ENCODE measurements at regions of chr3 and their contacts with region 1.

Region 1: DNA sequence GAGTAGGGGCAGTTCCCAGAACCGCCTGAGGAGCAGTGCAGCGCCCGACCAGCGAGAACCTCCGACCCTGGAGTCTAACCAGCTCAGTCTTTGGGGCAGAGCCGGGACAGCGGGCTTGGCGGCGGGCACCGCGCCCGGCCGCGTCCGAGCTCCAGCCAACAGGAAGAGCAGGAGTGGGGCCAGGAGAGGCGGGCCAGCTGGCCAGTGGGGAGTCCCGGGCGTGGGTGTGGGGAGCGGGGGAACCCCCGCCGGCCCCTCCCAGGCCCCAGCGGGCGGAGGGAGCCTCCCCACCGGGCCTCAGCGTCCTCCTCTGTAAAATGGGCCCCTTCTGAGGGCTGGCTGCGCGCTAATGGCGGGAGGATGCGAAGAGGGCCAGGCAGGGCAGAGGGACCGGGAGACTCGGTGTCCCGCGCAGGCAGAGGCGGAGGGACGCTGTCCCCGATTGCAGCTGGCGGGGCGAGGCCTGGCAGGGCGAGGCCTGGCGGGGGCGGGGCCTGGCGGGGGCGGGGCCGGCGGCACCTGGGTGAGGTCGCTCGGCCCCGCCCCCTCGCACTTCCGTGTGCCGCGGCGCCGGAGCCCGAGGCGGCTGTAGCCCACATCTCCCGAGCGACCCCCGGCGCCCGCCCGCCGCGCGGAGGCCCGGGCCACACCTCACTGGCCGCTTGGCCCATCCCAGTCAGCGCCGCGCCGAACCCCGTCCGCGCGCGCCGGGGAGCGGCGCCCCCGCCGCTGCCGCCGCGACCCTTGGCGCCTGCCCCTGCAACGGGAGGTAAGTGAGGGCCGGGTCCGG is at the start of gene PRKCD:
- DNase-seq: peak; percentile 93
- H3K4me3 ChIP-seq: peak within 1 kb of the TSS; percentile 57 to 97 (median 70)
- H3K27ac ChIP-seq: peak within 1 kb of the TSS; percentile 69 to 86 (median 80)
- H3K4me1 ChIP-seq: peaks cover 0 to 38% (median 20%) of the 10 kb centered on the region in 4 donors
- H3K27me3 ChIP-seq: peaks cover 0 to 7% (median 0%) of the 10 kb centered on the region in 3 donors
- CTCF ChIP-seq: peak in 3 of 4 experiments; percentile 45 to 71 (median 60)
- EP300 ChIP-seq: no peak
- POLR2A ChIP-seq: no peak
- total RNA-seq, gene PRKCD: 3.5 to 12.1 (median 10.5) TPM

Region 2: GRCh38 chr3:52845691-52846431 is 315.0 kb before region 1 on chr3:
- intact Hi-C with region 1: no loop called
- DNase-seq: no peak
- H3K4me3 ChIP-seq: no peak overlapping the region
- H3K27ac ChIP-seq: peak overlapping the region; percentile 67 to 79 (median 74)
- H3K4me1 ChIP-seq: peaks cover 0 to 50% (median 30%) of the 10 kb centered on the region in 4 donors
- H3K27me3 ChIP-seq: no peaks in the 10 kb centered on the region
- CTCF ChIP-seq: peak in 2 of 4 experiments; percentile 26 to 50
- EP300 ChIP-seq: no peak
- POLR2A ChIP-seq: no peak

Region 3: DNA sequence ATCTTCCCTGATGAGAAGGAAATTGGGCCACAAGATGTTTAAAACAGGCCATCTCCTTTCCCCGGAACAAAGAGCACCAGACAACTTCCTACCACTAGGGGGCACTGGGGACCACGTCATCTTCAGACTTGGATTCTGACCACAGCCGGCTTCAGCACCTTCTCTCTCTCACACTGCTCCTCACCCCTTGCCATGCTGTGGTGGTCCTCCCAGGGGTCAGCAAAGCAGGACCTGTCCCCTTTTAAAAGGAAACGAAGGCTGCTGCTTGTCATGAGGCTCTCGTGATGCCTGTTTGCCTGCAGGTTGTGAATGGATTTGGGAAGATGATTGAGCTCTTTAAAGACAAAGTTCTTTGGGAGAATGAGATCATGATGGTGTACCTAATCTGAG is 46.8 kb before region 1 on chr3:
- intact Hi-C with region 1: loop called (anchors 2 kb)
- DNase-seq: peak; percentile 92
- H3K4me3 ChIP-seq: no peak overlapping the region
- H3K27ac ChIP-seq: peak overlapping the region; percentile 37 to 82 (median 79)
- H3K4me1 ChIP-seq: peaks cover 0 to 50% (median 43%) of the 10 kb centered on the region in 4 donors
- H3K27me3 ChIP-seq: no peaks in the 10 kb centered on the region
- CTCF ChIP-seq: peak; percentile 92 to 99 (median 94)
- EP300 ChIP-seq: no peak
- POLR2A ChIP-seq: no peak

Region 4: GRCh38 chr3:53130179-53131061 is 30.4 kb before region 1 on chr3 and contains the start of gene RFT1:
- intact Hi-C with region 1: loop called (anchors 2 kb)
- DNase-seq: peak; percentile 99
- H3K4me3 ChIP-seq: peak within 1 kb of the TSS; percentile 69 to 82 (median 82)
- H3K27ac ChIP-seq: peak within 1 kb of the TSS; percentile 84 to 91 (median 90)
- H3K4me1 ChIP-seq: peaks cover 0 to 22% (median 18%) of the 10 kb centered on the region in 4 donors
- H3K27me3 ChIP-seq: no peaks in the 10 kb centered on the region
- CTCF ChIP-seq: no peak
- EP300 ChIP-seq: no peak
- POLR2A ChIP-seq: peak; percentile 52 to 59
- total RNA-seq, gene RFT1: 4.3 to 8.1 (median 6.9) TPM

Measured in sigmoid colon (tissue), 7 donors.